ENCODE measurements at regions of chr5 and their contacts with region 1.

Region 1: GRCh38 chr5:1737790-1738405 is 61.7 kb downstream of the MRPL36 start:
- DNase-seq: peak; percentile 85
- H3K4me3 Mint-ChIP-seq: no peak overlapping the region
- H3K27ac Mint-ChIP-seq: no peak overlapping the region
- H3K4me1 Mint-ChIP-seq: no peaks in the 10 kb centered on the region
- H3K27me3 Mint-ChIP-seq: peaks cover 27% of the 10 kb centered on the region

Region 2: DNA sequence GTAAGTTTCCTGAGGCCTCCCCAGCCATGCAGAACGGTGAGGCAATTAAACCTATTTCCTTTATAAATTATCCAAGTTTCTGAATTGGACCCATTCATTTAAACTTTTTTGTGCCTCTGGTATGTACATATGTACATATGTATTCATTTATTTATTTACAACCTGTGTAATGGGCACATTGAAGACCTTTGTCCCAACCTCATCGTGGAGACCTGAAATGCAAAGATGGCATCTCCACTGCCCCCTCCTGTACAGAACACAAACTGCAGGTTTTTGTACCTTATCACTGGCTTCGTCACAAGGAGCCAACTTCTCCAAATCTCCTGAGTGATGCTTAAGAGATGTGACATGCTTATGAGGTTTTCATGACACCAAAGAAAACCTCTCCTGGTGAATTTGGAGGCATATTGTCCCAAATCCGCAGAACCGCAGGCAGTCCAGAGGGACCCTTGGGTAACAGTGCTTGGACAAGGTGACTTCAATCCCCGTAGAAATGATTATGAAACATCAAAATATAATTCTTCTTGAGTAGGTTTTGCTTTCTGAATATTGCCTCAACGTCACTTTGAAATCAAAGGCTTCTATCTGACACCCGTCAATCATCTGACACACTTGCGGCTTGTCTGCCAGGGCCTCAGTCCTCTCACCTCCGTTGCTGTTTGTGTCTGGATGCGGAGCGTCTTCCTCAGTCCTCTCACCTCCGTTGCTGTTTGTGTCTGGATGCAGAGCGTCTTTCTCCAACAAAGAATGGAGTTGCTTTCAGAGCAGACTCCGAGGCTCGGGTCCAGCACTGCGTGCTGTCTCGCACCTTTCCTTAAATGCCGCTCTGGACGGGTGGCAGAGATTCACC is 279.9 kb after region 1 on chr5:
- intact Hi-C with region 1: loop called (anchors 10 kb)
- DNase-seq: peak; percentile 76
- H3K4me3 Mint-ChIP-seq: no peak overlapping the region
- H3K27ac Mint-ChIP-seq: no peak overlapping the region
- H3K4me1 Mint-ChIP-seq: no peaks in the 10 kb centered on the region
- H3K27me3 Mint-ChIP-seq: no peaks in the 10 kb centered on the region